ENCODE measurements at regions of chr13 and their contacts with region 1.

Region 1: DNA sequence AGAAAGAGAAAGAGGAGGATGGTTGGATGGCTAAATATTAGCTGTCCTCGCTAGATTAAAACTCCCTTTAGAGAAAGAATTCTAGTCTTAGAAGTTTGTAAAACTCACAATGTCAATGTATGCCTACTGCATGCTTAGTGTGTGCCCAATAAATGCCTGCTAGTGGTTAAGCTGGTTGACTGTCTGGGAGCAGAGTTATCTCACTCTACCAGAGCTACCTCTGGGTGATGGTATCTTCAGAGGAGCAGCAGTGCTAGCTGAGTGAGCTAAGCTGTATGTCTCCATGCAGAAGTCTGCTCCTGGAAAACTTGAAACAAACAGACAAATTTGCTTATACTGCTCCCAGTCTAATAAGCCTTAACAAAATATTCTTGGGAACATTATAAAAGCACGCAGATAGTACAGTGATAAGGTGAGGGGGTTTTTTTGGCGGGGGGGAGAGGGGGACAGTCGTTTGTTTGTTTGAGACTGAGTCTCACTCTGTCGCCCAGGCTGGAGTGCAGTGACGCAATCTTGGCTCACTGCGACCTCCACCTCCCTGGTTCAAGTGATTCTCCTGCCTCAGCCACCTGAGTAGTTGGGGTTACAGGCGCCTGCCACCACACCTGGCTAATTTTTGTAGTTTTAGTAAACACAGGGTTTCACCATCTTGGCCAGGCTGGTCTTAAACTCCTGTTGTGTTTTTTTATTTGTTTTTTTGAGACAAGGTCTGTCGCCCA is 202.8 kb upstream of the TSC22D1 start:
- DNase-seq: no peak
- H3K4me3 ChIP-seq: no peak overlapping the region
- H3K27me3 ChIP-seq: no peaks in the 10 kb centered on the region
- CTCF ChIP-seq: no peak

Region 2: DNA sequence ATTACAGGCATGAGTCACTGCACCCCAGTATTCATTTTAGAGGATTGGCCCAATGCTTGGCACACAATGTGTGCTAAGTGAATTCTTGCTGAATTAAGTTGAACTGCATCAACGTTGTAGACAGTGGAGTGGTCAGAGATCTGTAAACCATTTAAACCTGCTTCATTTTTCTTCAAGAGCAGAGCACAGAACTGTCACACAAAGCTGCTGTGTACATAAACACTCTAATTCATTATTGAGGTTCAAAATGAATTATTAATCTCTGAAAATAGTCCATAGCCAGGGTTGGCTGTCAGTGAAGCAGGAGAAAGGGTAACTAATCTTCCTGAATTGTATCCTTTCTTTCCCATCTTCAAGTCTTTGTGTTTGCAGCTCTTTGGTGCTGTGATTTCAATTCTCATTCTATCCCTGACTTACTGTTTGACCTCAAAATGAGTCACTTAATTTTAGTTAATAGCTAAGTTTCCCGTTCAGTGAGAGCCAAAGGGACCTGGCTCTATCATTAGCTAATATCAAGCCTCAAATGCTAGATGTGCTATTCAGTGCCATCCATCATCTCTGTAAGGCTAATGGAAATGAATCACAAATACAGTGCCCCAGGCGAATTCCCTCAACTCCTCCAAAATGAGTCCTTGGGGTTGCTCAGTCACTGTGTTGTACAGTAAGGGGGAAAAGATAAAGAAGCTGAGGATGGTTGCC is 125.8 kb before region 1 on chr13:
- CTCF ChIA-PET with region 1: no interaction called
- POLR2A ChIA-PET with region 1: no interaction called
- DNase-seq: no peak
- H3K4me3 ChIP-seq: no peak overlapping the region
- H3K27me3 ChIP-seq: no peaks in the 10 kb centered on the region
- CTCF ChIP-seq: no peak

Region 3: DNA sequence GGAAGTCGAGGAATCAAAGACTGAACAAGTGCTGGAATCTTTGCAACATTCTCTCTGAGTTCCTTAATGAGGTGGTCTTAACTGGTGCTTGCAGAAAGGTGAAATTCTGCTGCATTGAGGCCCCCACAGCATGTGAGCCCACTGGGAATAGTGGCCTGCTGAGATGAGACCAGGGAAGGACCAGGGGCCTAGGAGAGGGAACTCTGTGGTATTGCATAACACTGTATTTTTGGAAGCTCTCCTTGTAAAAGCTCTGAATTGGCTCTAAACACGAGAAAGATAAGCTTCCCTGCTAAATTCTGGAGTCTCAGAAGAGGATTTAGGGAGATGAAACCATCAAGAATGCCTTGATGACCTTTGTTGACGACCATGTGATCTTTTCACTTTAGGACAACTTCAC is 102.4 kb before region 1 on chr13:
- CTCF ChIA-PET with region 1: interaction called, 10 read pairs
- POLR2A ChIA-PET with region 1: no interaction called
- DNase-seq: no peak
- H3K4me3 ChIP-seq: no peak overlapping the region
- H3K27me3 ChIP-seq: no peaks in the 10 kb centered on the region
- CTCF ChIP-seq: no peak

Region 4: DNA sequence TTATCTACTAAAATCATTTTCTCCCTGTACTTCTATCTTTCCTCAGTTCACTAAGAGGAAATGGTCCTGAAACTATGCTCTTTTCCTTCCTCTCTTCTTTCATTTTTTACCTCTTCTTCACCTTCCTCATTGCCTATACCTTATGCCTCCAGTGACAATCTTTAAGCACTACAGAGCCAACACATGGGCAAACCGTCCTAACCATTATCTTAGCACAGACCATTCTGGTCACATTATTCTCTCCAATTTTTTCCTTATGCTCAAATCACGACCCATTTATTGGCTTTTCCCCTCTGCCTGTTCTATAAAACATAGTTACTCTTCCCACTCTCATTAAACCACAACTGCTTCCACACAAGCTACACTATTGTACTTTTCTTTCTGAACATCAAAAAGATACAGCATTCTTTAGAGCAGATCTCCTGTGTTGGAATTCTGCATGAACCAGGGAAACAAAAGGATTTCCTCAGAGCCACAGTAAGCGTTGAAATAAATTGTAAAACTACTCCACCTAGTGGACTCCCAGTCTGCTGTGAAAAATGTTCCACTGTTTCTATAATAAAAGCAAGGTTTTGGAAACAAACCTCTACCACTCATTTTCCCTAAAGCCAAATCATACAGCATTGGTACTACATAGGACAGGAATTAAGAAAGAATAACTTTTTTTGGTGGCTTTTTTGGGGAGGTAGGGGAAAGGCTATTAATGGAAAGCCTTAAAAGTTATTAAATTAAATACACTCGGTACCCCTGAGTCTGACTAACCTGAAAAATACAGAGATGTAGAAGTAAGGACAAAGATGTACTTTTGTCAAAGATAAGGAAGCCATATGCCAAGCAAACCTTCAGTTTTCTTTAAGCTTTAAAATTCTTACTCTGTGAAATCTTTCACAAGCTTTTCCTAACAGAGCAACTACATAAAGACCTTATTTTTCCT is 190.9 kb after region 1 on chr13:
- CTCF ChIA-PET with region 1: no interaction called
- POLR2A ChIA-PET with region 1: no interaction called
- DNase-seq: no peak
- H3K4me3 ChIP-seq: no peak overlapping the region
- H3K27me3 ChIP-seq: no peaks in the 10 kb centered on the region
- CTCF ChIP-seq: peak; percentile 70

Measured in BJ (cell line).